A549 (cell line): ENCODE measurements at regions of chr14 and their contacts with region 1.

Region 1: DNA sequence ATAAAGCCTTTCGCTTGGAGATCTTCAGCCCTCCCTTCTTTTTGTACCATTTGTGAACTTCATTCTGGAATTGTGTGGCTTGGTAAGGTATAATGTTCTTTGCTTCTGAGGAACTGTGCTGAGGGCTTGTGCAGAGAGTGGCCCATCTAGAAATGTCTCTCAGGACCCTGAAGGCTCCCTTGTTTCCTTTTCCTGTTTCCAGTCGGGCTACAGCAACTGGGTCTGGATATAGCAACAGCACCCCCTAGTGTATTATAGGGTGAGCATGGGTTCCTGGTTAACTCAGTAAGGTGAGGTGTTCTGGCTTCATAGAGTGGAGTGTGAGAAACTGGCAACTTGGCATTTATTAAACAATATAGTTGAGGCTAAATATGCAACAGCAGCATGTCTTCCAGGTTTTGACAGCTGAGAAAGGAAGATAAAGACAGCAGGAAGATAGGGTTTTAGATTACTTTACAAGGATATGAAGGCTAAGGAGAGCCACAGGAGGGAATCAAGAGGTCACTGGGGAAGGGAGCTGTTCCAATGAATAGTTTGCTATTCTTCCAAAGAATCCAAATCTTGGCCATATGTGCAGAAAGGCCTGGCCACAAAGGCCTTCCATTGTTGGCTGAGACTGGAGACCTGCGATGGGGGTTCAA is 49.1 kb upstream of the RNU6-8 start:
- DNase-seq: peak; percentile 60 to 80
- ATAC-seq: peak; percentile 87 to 94
- H3K4me3 ChIP-seq: no peak overlapping the region
- H3K27ac ChIP-seq: peak overlapping the region; percentile 1 to 37; a peak in 1 of 6 replicates
- H3K4me1 ChIP-seq: peaks cover 18% of the 10 kb centered on the region; the same call in 2 of the 3 replicates
- CTCF ChIP-seq: peak; percentile 90
- EP300 ChIP-seq: no peak
- POLR2A ChIP-seq: no peak
- RAD21 ChIP-seq: peak; percentile 96 to 99

Region 2: DNA sequence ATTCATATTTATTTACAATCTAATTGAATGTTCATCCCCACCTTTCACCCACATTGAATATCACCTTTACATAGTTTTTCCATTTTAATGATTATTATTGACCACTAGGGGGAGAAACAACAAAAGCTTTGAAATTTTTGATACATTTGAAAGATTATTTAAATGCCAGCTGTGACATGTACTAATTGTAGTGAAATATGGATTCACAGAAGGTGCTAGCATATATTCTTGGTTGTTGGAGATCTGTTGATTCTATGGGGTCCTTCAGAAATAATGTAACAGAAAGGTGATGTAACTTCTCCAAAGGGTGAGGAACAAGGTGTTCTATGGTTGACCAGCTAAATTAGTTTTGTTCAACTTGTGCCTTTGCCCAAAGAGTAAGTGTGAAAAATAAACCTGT is 741.9 kb before region 1 on chr14:
- CTCF ChIA-PET with region 1: interaction called, 54 read pairs
- POLR2A ChIA-PET with region 1: no interaction called
- DNase-seq: peak; percentile 16 to 33
- ATAC-seq: no peak
- H3K4me3 ChIP-seq: no peak overlapping the region
- H3K27ac ChIP-seq: no peak overlapping the region
- H3K4me1 ChIP-seq: no peaks in the 10 kb centered on the region
- CTCF ChIP-seq: peak; percentile 77
- EP300 ChIP-seq: no peak
- POLR2A ChIP-seq: no peak
- RAD21 ChIP-seq: peak; percentile 76 to 85

Region 3: DNA sequence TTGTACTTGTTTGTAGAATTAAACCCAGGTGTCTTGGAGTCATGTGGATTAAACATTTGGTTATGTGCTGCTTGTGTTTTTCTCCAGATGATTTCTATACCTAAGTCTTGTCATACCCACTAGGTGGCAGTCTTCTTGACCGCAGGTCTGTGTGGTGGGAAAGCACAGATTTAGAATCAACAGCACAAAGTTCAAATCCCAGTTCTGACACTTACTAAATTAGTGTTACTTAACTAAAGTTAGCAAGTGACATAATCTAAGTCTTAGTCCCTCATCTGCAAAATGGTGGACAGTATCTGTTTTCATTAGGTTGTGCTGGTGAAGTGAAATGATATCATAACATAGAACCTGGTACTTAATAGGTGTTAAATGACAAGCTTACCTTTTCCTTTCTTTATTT is 326.0 kb before region 1 on chr14:
- CTCF ChIA-PET with region 1: interaction called, 46 read pairs
- POLR2A ChIA-PET with region 1: no interaction called
- DNase-seq: peak; percentile 59 to 71
- ATAC-seq: no peak
- H3K4me3 ChIP-seq: no peak overlapping the region
- H3K27ac ChIP-seq: peak overlapping the region in 1 of 2 experiments; percentile 86; a peak in 4 of 6 replicates
- H3K4me1 ChIP-seq: peaks cover 45% of the 10 kb centered on the region
- CTCF ChIP-seq: peak; percentile 67
- EP300 ChIP-seq: no peak
- POLR2A ChIP-seq: no peak
- RAD21 ChIP-seq: peak; percentile 58 to 67

Region 4: GRCh38 chr14:32263939-32264567 is 11.9 kb after region 1 on chr14:
- CTCF ChIA-PET with region 1: interaction called, 12 read pairs
- POLR2A ChIA-PET with region 1: no interaction called
- DNase-seq: no peak
- ATAC-seq: no peak
- H3K4me3 ChIP-seq: no peak overlapping the region
- H3K27ac ChIP-seq: no peak overlapping the region
- H3K4me1 ChIP-seq: peaks cover 12% of the 10 kb centered on the region
- CTCF ChIP-seq: no peak
- EP300 ChIP-seq: no peak
- POLR2A ChIP-seq: no peak
- RAD21 ChIP-seq: no peak